Spleen (tissue), 13 donors: ENCODE measurements at regions of chr2 and their contacts with region 1.

Region 1: DNA sequence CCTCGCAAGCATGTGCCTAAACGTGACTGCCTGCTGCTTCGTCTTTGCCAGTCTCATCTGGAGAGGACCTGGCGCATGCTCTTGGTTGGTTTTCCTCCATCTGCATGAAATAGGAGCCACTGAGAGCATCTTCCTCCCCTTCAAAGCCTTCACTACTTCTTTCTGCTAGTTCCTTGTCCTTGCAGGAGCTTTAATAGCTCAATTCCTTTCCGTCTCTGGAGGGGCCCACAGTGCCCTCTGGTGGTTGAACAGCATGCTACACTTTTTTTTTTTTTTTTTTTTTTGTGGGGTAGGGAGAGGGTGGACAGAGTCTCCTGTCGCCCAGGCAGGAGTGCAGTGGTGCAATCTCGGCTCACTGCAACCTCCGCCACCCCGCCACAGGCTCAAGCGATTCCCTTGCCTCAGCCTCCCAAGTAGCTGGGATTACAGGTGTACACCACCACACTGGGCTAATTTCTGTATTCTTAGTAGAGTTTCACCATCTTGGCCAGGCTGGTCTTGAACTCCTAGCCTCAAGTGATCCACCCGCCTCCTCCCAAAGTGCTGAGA is 59.6 kb downstream of the SP110 start:
- DNase-seq: peak; percentile 82
- H3K4me3 ChIP-seq: no peak overlapping the region
- H3K27ac ChIP-seq: no peak overlapping the region
- H3K4me1 ChIP-seq: peaks cover 0 to 17% (median 8%) of the 10 kb centered on the region in 6 donors
- H3K27me3 ChIP-seq: no peaks in the 10 kb centered on the region
- CTCF ChIP-seq: peak in 10 of 11 experiments; percentile 31 to 91 (median 70)
- POLR2A ChIP-seq: no peak

Region 2: DNA sequence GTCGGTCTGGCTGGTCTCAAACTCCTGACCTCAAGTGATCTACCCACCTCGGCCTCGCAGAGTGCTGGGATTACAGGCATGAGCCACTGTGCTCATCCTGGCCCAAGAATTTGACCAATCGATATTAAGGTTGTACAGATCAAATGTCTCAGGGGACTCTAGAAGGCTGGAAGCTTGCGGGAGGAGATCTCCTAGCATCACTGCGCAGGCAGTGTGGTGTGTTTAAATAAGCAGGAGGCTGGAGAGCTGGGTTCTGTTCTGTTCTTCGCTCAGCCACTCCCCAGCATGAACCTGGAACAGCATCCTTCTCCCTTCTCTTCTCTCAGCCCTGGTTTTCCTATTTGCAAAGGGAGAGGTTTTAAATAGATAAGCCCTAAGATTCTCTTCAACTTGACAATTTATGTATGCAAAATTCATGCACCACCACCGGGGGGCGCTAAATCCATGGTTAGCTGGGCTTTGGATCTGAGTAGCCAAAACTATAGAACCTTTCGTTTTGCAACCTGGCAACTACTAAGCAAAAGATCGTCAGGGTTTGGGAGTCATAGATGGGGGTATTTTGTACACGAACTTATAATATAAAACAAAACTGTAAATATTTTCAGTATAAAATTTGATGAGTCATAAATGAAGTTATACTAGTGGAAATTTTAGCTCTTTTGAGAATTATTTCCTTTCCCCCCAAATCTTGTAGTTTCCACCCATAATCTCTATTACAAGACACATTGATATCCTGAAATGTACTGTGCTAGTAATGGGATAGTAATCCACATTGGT is 152.1 kb before region 1 on chr2:
- intact Hi-C with region 1: loop called (anchors 5 kb)
- DNase-seq: peak; percentile 93
- H3K4me3 ChIP-seq: peak overlapping the region in 1 of 8 donors; percentile 49
- H3K27ac ChIP-seq: no peak overlapping the region
- H3K4me1 ChIP-seq: peaks cover 0 to 16% (median 9%) of the 10 kb centered on the region in 6 donors
- H3K27me3 ChIP-seq: no peaks in the 10 kb centered on the region
- CTCF ChIP-seq: peak; percentile 41 to 86 (median 74)
- POLR2A ChIP-seq: no peak

Region 3: DNA sequence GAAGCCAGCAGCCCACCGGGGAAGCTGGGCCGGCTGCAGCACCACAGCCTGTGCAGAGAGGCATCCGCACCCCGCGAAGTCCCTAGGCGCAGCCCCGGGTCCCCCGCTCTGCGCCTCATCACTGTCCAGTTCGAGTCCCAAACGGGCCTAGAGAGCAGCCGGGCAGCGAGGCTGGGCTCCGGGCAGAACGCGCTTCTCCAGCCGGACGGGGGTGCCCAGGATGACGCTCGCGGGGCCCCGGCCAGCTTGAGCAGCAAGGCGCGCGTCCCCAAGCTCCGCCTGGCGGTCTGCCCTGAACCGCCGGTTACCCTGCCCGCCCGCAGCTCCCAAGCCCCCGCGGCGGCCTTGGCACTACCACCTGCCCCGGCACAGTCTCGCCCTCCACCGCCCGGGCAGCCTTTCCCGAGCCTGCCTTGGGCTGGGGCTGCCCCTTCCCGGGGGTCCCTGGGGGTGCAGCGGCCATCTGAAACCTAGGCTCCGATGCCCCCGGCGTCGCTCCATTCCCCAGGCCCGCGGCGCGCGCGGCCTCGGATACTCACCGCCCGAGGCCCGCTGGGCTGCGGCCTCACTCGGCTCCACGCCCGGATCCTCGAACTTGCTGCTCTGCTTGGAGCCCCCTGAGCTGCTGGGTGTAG is 92.1 kb before region 1 on chr2:
- intact Hi-C with region 1: loop called (anchors 2 kb)
- DNase-seq: peak; percentile 92
- H3K4me3 ChIP-seq: peak overlapping the region; percentile 63 to 95 (median 74)
- H3K27ac ChIP-seq: peak overlapping the region; percentile 49 to 89 (median 83)
- H3K4me1 ChIP-seq: peaks cover 3 to 45% (median 25%) of the 10 kb centered on the region in 6 donors
- H3K27me3 ChIP-seq: peaks cover 0 to 20% (median 6%) of the 10 kb centered on the region in 7 donors
- CTCF ChIP-seq: peak in 5 of 11 experiments; percentile 14 to 42 (median 28)
- POLR2A ChIP-seq: no peak